CD4-positive, alpha-beta memory T cell (primary cell): ENCODE measurements at regions of chr6 and their contacts with region 1.

Region 1: DNA sequence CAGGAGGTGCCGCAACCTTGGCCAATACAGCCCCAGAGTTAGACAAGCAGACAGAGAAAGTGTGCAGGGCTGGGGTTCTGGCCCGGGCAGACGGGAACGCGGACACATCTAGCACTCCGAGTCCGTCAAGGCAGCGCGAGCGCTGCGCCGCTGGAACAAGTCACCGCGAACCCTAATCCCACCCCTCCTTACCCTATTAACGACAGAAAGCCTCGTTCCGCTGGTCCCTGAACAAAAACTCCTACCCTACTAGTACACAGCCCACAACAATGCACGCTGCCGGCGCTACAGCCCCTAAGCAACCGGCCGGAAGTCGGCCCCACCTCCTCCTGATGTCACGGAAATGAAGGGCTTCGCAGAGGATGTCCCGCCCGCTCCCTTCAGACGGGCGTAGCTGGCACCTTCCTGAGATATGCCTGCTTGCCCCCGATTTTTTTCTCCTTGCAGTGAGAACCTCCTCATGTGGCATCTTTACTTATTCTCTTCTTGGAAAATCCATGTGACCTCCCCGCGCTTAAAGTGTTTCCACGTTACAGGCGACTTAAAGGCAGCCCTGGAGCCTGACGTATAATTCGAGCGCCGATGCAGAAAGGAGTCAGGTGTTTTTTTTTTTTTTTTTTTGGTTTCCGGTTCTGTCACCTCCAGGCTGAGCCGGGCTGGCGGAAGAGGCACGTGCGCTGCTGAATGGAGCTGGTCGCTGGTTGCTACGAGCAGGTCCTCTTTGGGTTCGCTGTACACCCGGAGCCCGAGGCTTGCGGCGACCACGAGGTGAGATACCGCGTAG is at the starts of genes C6orf52 and PAK1IP1:
- DNase-seq: peak; percentile 96 to 97 (median 97)
- H3K4me3 ChIP-seq: peak within 1 kb of the TSS; percentile 45 to 88
- H3K4me3 Mint-ChIP-seq: peak within 1 kb of the TSS; percentile 93 to 100 (median 98)
- H3K27ac ChIP-seq: peak within 1 kb of the TSS; percentile 92
- H3K27ac Mint-ChIP-seq: peak within 1 kb of the TSS; percentile 100
- H3K4me1 ChIP-seq: peaks cover 34% of the 10 kb centered on the region
- H3K4me1 Mint-ChIP-seq: peaks cover 25 to 49% (median 34%) of the 10 kb centered on the region in 4 donors
- H3K27me3 ChIP-seq: no peaks in the 10 kb centered on the region
- H3K27me3 Mint-ChIP-seq: peaks cover 2 to 6% of the 10 kb centered on the region in 2 donors
- total RNA-seq, gene C6orf52: 1.2 to 1.5 TPM
- total RNA-seq, gene PAK1IP1: 7.2 to 7.4 TPM

Region 2: GRCh38 chr6:10528170-10528981 is 166.1 kb before region 1 on chr6:
- CTCF ChIA-PET with region 1: no interaction called
- POLR2A ChIA-PET with region 1: interaction called, 10 read pairs
- intact Hi-C with region 1: loop called (anchors 2 kb)
- DNase-seq: peak in 3 of 5 donors; percentile 10 to 30 (median 23)
- H3K4me3 ChIP-seq: peak overlapping the region; percentile 77 to 92
- H3K4me3 Mint-ChIP-seq: peak overlapping the region; percentile 88 to 95 (median 92)
- H3K27ac ChIP-seq: peak overlapping the region; percentile 44
- H3K27ac Mint-ChIP-seq: peak overlapping the region; percentile 11 to 94 (median 90)
- H3K4me1 ChIP-seq: peaks cover 45% of the 10 kb centered on the region
- H3K4me1 Mint-ChIP-seq: peaks cover 25 to 49% (median 37%) of the 10 kb centered on the region in 4 donors
- H3K27me3 ChIP-seq: no peaks in the 10 kb centered on the region
- H3K27me3 Mint-ChIP-seq: peaks cover 0 to 1% of the 10 kb centered on the region in 2 donors

Region 3: GRCh38 chr6:10747251-10747972 is 52.9 kb after region 1 on chr6 and contains the start of gene TMEM14B:
- CTCF ChIA-PET with region 1: interaction called, 7 read pairs
- POLR2A ChIA-PET with region 1: interaction called, 51 read pairs
- intact Hi-C with region 1: loop called (anchors 1 kb)
- DNase-seq: peak; percentile 98 to 99 (median 99)
- H3K4me3 ChIP-seq: peak within 1 kb of the TSS; percentile 76 to 83
- H3K4me3 Mint-ChIP-seq: peak within 1 kb of the TSS; percentile 86 to 99 (median 96)
- H3K27ac ChIP-seq: peak within 1 kb of the TSS; percentile 74
- H3K27ac Mint-ChIP-seq: peak within 1 kb of the TSS; percentile 96 to 99 (median 97)
- H3K4me1 ChIP-seq: peaks cover 44% of the 10 kb centered on the region
- H3K4me1 Mint-ChIP-seq: peaks cover 22 to 72% (median 51%) of the 10 kb centered on the region in 4 donors
- H3K27me3 ChIP-seq: no peaks in the 10 kb centered on the region
- H3K27me3 Mint-ChIP-seq: no peaks in the 10 kb centered on the region
- total RNA-seq, gene TMEM14B: 76.9 to 80.6 TPM

Region 4: DNA sequence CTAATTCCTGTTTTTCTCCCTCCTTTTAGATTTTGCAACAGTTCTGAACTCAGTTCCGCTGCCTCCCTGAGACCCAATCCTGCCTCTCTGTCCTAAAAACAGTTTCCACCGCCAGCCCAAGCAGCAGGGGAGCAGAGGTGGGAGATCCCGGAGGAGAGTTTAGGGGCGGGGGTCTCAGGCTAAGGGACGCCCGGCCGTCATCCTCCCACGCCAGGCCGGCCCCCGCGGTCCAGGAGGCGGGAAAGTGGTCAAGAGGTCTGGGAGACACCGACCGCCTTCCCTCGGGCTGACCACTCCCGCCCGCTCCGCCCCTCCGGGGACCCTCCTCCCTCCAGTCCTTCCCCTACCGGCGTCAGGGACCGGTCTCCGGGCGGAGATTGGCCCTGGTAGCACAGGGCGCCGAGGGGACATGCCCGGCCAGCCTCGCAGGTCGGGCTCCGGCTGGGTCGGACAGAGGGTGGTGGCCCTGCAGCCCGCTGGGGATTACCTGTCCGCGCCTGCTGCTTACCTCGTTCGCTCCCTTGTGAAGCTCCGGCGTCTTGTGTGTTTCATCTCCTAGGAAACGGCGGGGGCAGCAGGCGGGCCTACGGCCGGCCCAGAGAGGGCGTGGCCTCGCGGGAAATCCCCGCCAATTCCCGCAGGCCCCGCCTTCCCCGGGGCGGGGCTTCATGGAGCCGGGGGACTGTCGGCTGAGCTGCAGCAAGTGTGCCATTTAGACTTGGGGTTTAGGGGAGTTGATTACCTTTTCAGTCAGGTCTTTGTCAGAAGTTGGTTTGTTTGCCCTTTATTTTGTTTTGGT is 143.7 kb after region 1 on chr6 and contains the start of gene MAK:
- CTCF ChIA-PET with region 1: no interaction called
- POLR2A ChIA-PET with region 1: interaction called, 4 read pairs
- intact Hi-C with region 1: loop called (anchors 1 kb)
- DNase-seq: peak; percentile 89 to 91 (median 90)
- H3K4me3 ChIP-seq: peak within 1 kb of the TSS; percentile 5 to 44
- H3K4me3 Mint-ChIP-seq: peak within 1 kb of the TSS; percentile 79 to 92 (median 84)
- H3K27ac ChIP-seq: peak within 1 kb of the TSS; percentile 22
- H3K27ac Mint-ChIP-seq: peak within 1 kb of the TSS; percentile 36 to 90 (median 82)
- H3K4me1 ChIP-seq: peaks cover 25% of the 10 kb centered on the region
- H3K4me1 Mint-ChIP-seq: peaks cover 7 to 26% (median 20%) of the 10 kb centered on the region in 4 donors
- H3K27me3 ChIP-seq: peaks cover 41% of the 10 kb centered on the region
- H3K27me3 Mint-ChIP-seq: peaks cover 37 to 51% of the 10 kb centered on the region in 2 donors
- total RNA-seq, gene MAK: not detected